IMR-90 (cell line): ENCODE measurements at regions of chr9 and their contacts with region 1.

Region 1: GRCh38 chr9:97109194-97109811 is 70.4 kb upstream of the CTSV start:
- DNase-seq: peak; percentile 6
- ATAC-seq: peak; percentile 37; the same call in 1 of the 2 replicates
- H3K4me3 ChIP-seq: no peak overlapping the region
- H3K27ac ChIP-seq: no peak overlapping the region
- H3K4me1 ChIP-seq: no peaks in the 10 kb centered on the region
- H3K27me3 ChIP-seq: no peaks in the 10 kb centered on the region
- CTCF ChIP-seq: peak; percentile 31; the same call in 1 of the 2 replicates
- POLR2A ChIP-seq: no peak
- RAD21 ChIP-seq: peak; percentile 32

Region 2: DNA sequence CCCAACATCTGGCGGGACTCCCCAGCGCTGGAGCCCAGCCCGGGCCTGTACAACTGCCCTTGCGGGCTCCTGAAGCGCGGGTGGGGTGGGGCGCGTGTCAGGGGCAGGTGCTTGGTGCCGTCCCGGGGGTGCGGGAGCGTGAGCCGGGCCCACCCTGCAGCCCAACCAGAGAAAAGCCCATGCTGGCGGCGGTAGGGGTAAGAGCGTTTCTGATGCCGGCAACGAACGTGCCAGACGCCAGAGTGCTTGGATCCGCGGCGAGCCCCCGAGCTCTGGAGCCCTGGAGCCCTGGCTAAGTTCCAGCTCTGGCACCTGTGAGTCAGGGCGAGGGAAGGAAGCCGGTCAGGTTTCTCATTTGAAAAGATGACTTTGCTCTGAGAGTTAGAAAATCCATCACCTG is 389.4 kb before region 1 on chr9:
- CTCF ChIA-PET with region 1: no interaction called
- POLR2A ChIA-PET with region 1: no interaction called
- dilution Hi-C with region 1: no loop called
- in situ Hi-C with region 1: loop called (anchors 25 kb)
- intact Hi-C with region 1: no loop called
- DNase-seq: no peak
- ATAC-seq: no peak
- H3K4me3 ChIP-seq: no peak overlapping the region
- H3K27ac ChIP-seq: no peak overlapping the region
- H3K4me1 ChIP-seq: no peaks in the 10 kb centered on the region
- H3K27me3 ChIP-seq: peaks cover 17% of the 10 kb centered on the region
- CTCF ChIP-seq: no peak
- POLR2A ChIP-seq: no peak
- RAD21 ChIP-seq: no peak

Region 3: DNA sequence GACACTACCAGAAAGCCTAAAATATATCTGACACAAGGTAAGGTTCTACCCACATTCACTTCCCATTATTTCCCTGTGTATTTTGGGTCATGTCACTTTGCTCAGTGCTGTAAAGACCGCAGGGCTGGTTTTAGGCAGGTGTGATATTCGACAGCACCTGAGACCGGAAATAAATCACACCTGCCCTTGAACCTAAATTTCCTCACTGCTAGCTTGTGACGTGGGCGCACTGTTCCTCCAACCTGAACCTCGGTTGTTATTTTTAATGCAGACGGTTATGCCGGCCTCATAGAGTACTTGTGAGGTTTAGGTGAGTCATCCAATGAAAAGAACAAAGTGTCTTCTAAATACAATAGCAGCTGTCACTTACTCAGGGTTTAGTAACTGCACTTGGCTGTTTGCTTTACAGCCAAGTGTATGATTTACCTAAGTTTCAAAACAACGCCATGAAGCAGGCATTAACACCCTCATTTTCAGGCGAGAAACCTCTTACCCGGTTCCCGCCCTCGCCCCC is 234.3 kb before region 1 on chr9:
- CTCF ChIA-PET with region 1: no interaction called
- POLR2A ChIA-PET with region 1: no interaction called
- dilution Hi-C with region 1: no loop called
- in situ Hi-C with region 1: no loop called
- intact Hi-C with region 1: loop called (anchors 5 kb)
- DNase-seq: peak; percentile 59
- ATAC-seq: no peak; the same call in 1 of the 2 replicates
- H3K4me3 ChIP-seq: peak overlapping the region; percentile 48
- H3K27ac ChIP-seq: no peak overlapping the region
- H3K4me1 ChIP-seq: no peaks in the 10 kb centered on the region
- H3K27me3 ChIP-seq: peaks cover 12% of the 10 kb centered on the region
- CTCF ChIP-seq: no peak
- POLR2A ChIP-seq: no peak
- RAD21 ChIP-seq: no peak

Region 4: DNA sequence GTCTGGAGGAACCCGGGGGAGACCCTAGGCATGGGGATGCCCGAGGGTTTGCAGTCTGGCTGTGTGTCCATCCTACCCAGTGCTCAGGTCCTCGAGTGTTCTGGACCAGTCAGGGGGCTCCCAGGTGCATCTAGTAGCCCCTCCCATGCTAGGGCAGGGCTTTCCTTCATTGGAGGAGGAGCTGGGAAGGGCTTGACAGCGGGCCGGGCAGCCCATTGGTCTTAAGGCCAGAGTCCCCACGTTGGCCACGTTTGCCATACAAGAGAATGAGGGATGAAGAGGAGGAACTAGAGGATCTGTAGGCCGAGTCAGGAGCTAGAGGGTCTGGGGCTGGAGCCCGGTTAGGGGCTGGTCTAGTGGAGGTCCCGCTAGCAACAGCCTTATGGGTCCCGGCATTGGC is 33.1 kb before region 1 on chr9:
- CTCF ChIA-PET with region 1: no interaction called
- POLR2A ChIA-PET with region 1: no interaction called
- dilution Hi-C with region 1: no loop called
- in situ Hi-C with region 1: no loop called
- intact Hi-C with region 1: no loop called
- DNase-seq: no peak
- ATAC-seq: no peak
- H3K4me3 ChIP-seq: no peak overlapping the region
- H3K27ac ChIP-seq: no peak overlapping the region
- H3K4me1 ChIP-seq: no peaks in the 10 kb centered on the region
- H3K27me3 ChIP-seq: peaks cover 4% of the 10 kb centered on the region
- CTCF ChIP-seq: no peak
- POLR2A ChIP-seq: no peak
- RAD21 ChIP-seq: no peak

Region 5: DNA sequence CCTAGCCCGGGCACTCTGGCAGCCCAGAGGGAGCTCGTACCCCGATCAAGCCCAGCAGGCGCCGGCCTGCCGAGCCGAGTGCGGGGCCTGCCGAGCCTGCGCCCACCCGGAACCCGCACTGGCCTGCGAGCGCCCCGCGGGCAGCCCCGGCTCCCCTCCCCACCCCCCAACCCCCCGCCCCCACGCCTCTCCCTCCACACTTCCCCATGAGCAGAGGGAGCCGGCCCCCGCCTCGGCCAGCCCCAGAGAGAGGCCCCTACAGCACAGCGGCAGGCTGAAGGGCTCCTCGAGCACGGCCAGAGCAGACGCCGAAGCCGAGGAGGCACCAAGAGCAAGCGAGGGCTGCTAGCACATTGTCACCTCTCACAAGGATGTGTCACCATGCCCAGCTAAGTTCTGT is 162.0 kb after region 1 on chr9:
- CTCF ChIA-PET with region 1: no interaction called
- POLR2A ChIA-PET with region 1: interaction called, 14 read pairs
- dilution Hi-C with region 1: no loop called
- in situ Hi-C with region 1: no loop called
- intact Hi-C with region 1: no loop called
- DNase-seq: no peak
- ATAC-seq: no peak
- H3K4me3 ChIP-seq: no peak overlapping the region
- H3K27ac ChIP-seq: no peak overlapping the region
- H3K4me1 ChIP-seq: no peaks in the 10 kb centered on the region
- H3K27me3 ChIP-seq: no peaks in the 10 kb centered on the region
- CTCF ChIP-seq: no peak
- POLR2A ChIP-seq: no peak
- RAD21 ChIP-seq: no peak